Mammary epithelial cell (primary cell): ENCODE measurements at regions of chr1 and their contacts with region 1.

Region 1: GRCh38 chr1:82346141-82346540 is 545.4 kb downstream of the ADGRL2 start:
- DNase-seq: no peak
- H3K4me3 ChIP-seq: no peak overlapping the region
- H3K27ac ChIP-seq: no peak overlapping the region
- H3K4me1 ChIP-seq: no peaks in the 10 kb centered on the region
- H3K27me3 ChIP-seq: no peaks in the 10 kb centered on the region
- CTCF ChIP-seq: no peak

Region 2: GRCh38 chr1:81617308-81617967 is 728.7 kb before region 1 on chr1:
- CTCF ChIA-PET with region 1: no interaction called
- dilution Hi-C with region 1: no loop called
- in situ Hi-C with region 1: no loop called
- intact Hi-C with region 1: no loop called
- DNase-seq: peak; percentile 16
- H3K4me3 ChIP-seq: no peak overlapping the region
- H3K27ac ChIP-seq: no peak overlapping the region
- H3K4me1 ChIP-seq: no peaks in the 10 kb centered on the region
- H3K27me3 ChIP-seq: no peaks in the 10 kb centered on the region
- CTCF ChIP-seq: peak in 1 of 2 donors; percentile 29

Region 3: DNA sequence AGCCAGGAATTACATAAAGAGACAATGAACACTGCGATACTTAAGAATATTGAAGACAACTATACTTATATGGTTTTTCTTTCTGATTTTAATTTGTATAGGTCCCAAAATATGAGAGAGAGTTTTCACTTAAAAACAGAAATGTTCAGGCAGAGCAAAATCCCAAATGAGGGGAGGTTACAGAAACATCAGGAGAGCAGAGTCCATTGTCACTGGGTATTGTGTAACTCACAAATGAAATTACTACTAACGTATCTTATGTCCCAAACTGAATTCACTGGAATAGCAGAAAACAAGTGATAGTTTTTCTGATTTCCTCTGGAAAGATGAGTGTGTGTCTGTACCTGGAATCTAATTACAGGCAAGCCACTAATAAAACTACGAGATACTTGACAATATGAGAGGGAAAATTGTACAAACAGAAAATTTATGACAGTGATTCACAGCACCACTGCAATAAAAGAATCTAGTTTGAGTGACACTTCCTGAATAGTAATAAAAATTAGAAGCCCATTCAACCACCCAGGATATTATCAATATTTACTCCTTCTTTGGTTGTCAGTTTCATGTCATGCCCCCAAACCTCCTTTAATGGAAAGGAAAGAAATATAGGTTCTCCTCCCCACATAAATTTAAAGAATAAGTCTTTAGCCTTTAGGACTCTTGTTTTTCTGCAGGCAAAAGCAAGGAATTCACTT is 22.8 kb before region 1 on chr1:
- CTCF ChIA-PET with region 1: no interaction called
- dilution Hi-C with region 1: no loop called
- in situ Hi-C with region 1: no loop called
- intact Hi-C with region 1: loop called (anchors 1 kb)
- DNase-seq: no peak
- H3K4me3 ChIP-seq: no peak overlapping the region
- H3K27ac ChIP-seq: no peak overlapping the region
- H3K4me1 ChIP-seq: peaks cover 17% of the 10 kb centered on the region
- H3K27me3 ChIP-seq: no peaks in the 10 kb centered on the region
- CTCF ChIP-seq: no peak